ENCODE measurements at regions of chr1 and their contacts with region 1.

Region 1: DNA sequence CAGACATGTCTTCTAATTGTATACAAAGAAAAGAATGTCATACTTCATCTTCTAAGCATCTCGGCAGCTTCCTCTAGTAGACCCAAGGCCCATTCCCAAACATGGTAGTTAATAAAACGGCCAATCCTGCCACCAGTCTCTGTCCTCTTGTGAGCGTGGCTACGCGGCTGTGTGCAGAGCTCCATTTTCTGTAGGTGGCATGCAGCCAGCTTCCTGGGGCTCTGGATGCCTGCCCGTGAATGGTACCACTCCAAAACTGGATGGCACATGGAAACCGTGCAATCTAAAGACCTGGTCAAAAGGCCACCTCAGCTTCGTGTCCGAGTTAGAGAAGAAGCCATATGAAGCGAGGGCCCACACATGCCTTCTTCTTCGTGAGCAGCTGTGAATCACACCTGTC is 110.7 kb downstream of the SIPA1L2 start:
- DNase-seq: no peak
- H3K4me3 Mint-ChIP-seq: no peak overlapping the region
- H3K27ac Mint-ChIP-seq: no peak overlapping the region
- H3K4me1 Mint-ChIP-seq: peaks cover 18% of the 10 kb centered on the region
- H3K27me3 Mint-ChIP-seq: no peaks in the 10 kb centered on the region
- CTCF ChIP-seq: no peak

Region 2: GRCh38 chr1:232174306-232174705 is 344.9 kb before region 1 on chr1:
- CTCF ChIA-PET with region 1: no interaction called
- POLR2A ChIA-PET with region 1: no interaction called
- intact Hi-C with region 1: loop called (anchors 5 kb)
- DNase-seq: no peak
- H3K4me3 Mint-ChIP-seq: no peak overlapping the region
- H3K27ac Mint-ChIP-seq: no peak overlapping the region
- H3K4me1 Mint-ChIP-seq: no peaks in the 10 kb centered on the region
- H3K27me3 Mint-ChIP-seq: no peaks in the 10 kb centered on the region
- CTCF ChIP-seq: no peak

Region 3: DNA sequence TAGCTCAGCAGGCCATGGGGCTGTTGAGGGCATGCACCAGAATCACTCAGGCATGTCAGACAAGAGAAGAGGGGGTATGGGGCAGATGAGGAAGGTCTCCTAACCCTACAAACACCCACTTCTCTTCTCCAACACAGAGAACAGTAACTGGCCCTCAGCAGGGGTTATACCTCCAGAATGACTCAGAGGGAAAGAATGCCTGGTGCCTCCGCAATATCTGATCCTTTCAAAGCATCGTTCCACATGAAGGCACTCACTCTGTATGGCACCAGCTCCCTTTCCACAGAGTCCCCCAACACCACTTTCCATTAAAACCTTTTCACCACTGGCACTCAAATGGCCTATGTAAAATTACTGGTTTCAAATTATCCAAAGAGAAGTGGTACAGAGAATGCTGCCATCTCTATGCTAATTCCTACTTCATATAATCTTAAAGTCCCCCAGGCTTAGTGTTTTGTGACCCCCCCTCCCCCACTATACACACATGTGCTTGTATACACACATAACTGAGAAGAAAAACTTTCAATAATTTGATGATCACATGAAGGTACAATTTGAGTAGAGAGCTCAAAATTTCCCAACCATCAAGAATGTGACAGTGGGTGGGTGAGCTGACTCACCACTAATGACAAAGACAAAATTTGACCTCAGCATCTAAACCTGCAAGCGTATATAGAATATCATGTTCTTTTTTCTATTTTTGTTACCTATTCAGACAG is 19.2 kb after region 1 on chr1:
- CTCF ChIA-PET with region 1: no interaction called
- POLR2A ChIA-PET with region 1: interaction called, 73 read pairs
- intact Hi-C with region 1: no loop called
- DNase-seq: peak; percentile 93
- H3K4me3 Mint-ChIP-seq: peak overlapping the region; percentile 48
- H3K27ac Mint-ChIP-seq: peak overlapping the region; percentile 86
- H3K4me1 Mint-ChIP-seq: peaks cover 48% of the 10 kb centered on the region
- H3K27me3 Mint-ChIP-seq: no peaks in the 10 kb centered on the region
- CTCF ChIP-seq: no peak

Measured in MCF 10A (cell line).